Mammary epithelial cell (primary cell): ENCODE measurements at regions of chr16 and their contacts with region 1.

Region 1: DNA sequence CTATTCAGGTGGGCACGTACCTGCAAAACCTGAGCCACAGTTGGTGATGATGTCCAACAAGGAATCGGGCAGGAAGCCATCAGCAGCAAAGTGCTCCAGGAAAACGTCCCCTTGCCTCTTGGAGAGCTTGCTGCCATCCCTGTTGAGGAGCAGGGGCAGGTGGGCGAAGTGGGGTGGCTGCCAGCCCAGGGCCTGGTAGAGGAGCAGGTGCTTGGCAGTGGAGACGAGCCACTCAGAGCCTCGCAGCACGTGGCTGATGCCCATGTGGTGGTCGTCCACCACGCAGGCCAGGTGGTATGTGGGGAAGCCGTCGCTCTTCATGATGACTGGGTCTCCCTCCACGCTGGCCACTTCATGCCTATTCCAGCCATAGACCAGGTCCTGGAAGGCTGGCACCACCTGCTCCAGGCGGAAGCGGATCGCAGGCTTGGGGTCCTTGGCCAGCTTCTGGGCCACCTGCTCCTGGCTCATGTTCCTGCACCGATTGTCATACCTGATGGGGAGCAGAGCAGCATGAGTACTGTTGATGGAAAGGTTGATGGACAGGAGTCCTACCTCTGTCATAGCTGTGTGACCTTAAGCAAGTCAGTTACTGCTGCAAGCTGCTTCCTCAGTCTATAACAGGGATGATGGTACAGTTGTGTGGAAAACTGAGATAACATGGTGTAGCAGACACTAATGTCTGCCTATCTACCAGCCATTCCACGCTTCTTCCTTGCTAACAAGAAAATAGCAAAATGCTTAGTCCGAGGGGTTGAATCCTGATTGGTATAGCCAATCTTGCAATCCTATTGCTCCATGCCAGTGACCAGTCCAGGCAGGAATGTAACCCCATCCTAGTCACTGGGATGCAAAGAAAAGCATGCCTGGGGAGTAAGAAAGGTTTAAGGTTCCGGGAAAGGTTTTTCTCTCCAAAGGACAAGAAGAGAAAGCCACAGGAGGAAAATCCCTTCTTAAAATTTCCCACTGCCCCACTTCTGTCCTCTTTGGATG is 22.0 kb downstream of the EARS2 start:
- DNase-seq: peak; percentile 16
- H3K4me3 ChIP-seq: no peak overlapping the region
- H3K27ac ChIP-seq: no peak overlapping the region
- H3K4me1 ChIP-seq: peaks cover 18% of the 10 kb centered on the region
- H3K27me3 ChIP-seq: no peaks in the 10 kb centered on the region
- CTCF ChIP-seq: no peak

Region 2: DNA sequence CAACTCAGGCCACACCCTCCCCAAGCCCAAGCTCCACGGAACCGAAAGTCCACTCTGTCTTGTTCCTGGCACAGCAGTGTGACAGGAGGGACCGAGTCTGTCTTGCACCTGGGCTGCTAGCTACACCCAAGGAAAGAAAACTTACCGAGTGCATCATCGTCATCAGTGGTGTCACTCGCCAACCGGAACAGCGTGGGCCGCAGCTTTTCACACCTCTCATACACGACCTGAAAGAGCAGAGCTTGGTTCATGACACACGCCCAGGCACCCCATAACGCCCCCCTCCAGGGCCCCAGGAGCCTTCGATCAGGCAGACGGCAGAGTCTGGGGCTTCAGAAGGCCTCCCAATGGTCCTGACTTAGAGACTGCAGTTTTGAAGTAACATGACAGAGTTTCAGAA is 52.4 kb before region 1 on chr16:
- CTCF ChIA-PET with region 1: no interaction called
- dilution Hi-C with region 1: loop called (anchors 5 kb)
- in situ Hi-C with region 1: no loop called
- intact Hi-C with region 1: no loop called
- DNase-seq: no peak
- H3K4me3 ChIP-seq: no peak overlapping the region
- H3K27ac ChIP-seq: no peak overlapping the region
- H3K4me1 ChIP-seq: no peaks in the 10 kb centered on the region
- H3K27me3 ChIP-seq: no peaks in the 10 kb centered on the region
- CTCF ChIP-seq: no peak

Region 3: GRCh38 chr16:23510164-23510914 is 24.8 kb before region 1 on chr16 and contains the start of gene GGA2:
- CTCF ChIA-PET with region 1: no interaction called
- dilution Hi-C with region 1: no loop called
- in situ Hi-C with region 1: no loop called
- intact Hi-C with region 1: loop called (anchors 1 kb)
- DNase-seq: peak; percentile 57
- H3K4me3 ChIP-seq: peak within 1 kb of the TSS; percentile 53 to 63 (median 54)
- H3K27ac ChIP-seq: peak within 1 kb of the TSS; percentile 11
- H3K4me1 ChIP-seq: peaks cover 8% of the 10 kb centered on the region
- H3K27me3 ChIP-seq: no peaks in the 10 kb centered on the region
- CTCF ChIP-seq: no peak
- total RNA-seq, gene GGA2: 29.2 to 33.2 TPM